ENCODE measurements at regions of chr1 and their contacts with region 1.

Region 1: GRCh38 chr1:234610348-234611152 is 572 bp upstream of the IRF2BP2 start:
- DNase-seq: peak; percentile 99

Region 2: DNA sequence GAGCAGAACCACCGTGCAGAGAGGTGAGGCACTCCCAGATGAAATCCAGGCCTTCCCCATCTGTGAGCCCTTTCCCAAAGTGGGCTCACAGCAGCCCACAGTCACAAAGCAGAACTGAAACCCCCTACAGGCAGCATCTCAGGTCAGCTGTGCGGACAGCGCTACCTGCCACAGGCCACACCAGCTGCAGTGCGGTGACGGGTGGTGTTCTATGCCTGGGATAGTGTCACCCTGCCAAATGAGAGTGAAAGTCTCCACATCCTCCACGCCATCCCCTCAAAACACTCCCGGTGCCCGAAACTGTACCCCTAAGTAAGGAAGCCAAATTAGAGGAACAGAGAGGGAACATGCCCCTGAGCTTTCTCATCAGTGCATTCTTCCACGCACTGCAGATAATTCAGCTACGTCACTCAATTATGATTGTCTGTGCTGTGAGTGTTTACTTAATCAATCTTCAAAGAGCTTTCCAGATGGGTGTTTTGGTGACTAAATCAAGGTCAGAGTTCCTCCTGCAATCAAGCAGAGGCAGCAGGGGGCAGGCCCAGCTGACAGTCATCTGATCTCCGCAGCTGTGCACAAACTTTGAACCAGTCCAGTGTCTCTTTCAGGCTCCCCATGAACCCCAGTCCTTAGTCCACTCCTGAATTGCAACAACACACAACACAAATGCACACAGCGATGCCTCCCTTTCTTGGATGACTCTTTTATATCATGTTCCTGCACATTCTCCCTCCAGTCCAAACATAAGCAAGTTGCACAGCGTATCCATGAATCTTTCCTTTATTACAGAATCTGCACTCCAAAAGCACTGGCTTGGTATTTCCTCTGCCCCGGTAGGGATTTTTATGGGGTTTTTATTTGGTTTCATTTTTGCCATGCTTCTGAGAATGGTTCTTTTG is 368.1 kb after region 1 on chr1:
- intact Hi-C with region 1: loop called in 1 of 2 experiments (anchors 10 kb)
- DNase-seq: peak; percentile 86

Region 3: GRCh38 chr1:234987415-234988154 is 377.0 kb after region 1 on chr1:
- intact Hi-C with region 1: loop called (anchors 5 to 10 kb)
- DNase-seq: peak; percentile 92

Measured in posterior vena cava (tissue), 2 donors.